Endothelial cell of umbilical vein (primary cell): ENCODE measurements at regions of chr19 and their contacts with region 1.

Region 1: GRCh38 chr19:10095948-10096621 is 6.4 kb downstream of the ANGPTL6 start:
- DNase-seq: peak; percentile 91
- H3K4me3 ChIP-seq: peak overlapping the region in 1 of 3 experiments; percentile 35
- H3K27ac ChIP-seq: no peak overlapping the region
- H3K4me1 ChIP-seq: peaks cover 3% of the 10 kb centered on the region
- H3K27me3 ChIP-seq: peaks cover 0 to 3% of the 10 kb centered on the region in 2 experiments
- CTCF ChIP-seq: no peak
- POLR2A ChIP-seq: peak; percentile 75

Region 2: DNA sequence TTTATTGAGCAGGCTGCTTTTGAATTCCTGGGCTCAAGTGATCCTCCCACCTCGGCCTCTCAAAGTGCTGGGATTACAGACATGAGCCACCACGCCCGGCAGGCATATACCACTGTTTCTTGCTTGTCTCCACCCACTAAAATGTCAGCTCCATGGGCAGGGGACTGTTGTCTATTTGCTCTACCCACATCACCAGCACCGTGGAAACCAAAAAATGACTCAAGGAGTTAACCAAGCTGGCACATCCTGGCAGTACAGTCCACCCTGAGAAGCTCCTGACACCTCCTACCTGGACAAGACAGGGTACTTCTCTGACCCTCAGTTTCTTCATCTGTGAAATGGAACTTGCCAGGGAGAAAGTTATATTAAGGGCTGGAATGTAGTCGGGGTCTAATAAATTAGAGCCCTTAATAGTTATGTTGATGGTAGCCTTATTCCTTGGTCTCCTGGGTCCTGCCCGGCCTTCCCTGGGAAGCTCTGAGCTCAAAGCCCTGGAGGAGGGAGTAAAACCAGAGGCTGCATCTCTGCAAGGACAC is 68.9 kb before region 1 on chr19:
- CTCF ChIA-PET with region 1: no interaction called
- POLR2A ChIA-PET with region 1: no interaction called
- dilution Hi-C with region 1: no loop called
- intact Hi-C with region 1: no loop called
- DNase-seq: no peak
- H3K4me3 ChIP-seq: no peak overlapping the region
- H3K27ac ChIP-seq: no peak overlapping the region
- H3K4me1 ChIP-seq: peaks cover 4% of the 10 kb centered on the region
- H3K27me3 ChIP-seq: peaks cover 3 to 4% of the 10 kb centered on the region in 2 experiments
- CTCF ChIP-seq: no peak
- POLR2A ChIP-seq: no peak

Region 3: GRCh38 chr19:10061717-10062310 is 34.3 kb before region 1 on chr19:
- CTCF ChIA-PET with region 1: no interaction called
- POLR2A ChIA-PET with region 1: no interaction called
- dilution Hi-C with region 1: no loop called
- intact Hi-C with region 1: no loop called
- DNase-seq: no peak
- H3K4me3 ChIP-seq: no peak overlapping the region
- H3K27ac ChIP-seq: no peak overlapping the region
- H3K4me1 ChIP-seq: no peaks in the 10 kb centered on the region
- H3K27me3 ChIP-seq: no peaks in the 10 kb centered on the region
- CTCF ChIP-seq: no peak
- POLR2A ChIP-seq: no peak

Region 4: DNA sequence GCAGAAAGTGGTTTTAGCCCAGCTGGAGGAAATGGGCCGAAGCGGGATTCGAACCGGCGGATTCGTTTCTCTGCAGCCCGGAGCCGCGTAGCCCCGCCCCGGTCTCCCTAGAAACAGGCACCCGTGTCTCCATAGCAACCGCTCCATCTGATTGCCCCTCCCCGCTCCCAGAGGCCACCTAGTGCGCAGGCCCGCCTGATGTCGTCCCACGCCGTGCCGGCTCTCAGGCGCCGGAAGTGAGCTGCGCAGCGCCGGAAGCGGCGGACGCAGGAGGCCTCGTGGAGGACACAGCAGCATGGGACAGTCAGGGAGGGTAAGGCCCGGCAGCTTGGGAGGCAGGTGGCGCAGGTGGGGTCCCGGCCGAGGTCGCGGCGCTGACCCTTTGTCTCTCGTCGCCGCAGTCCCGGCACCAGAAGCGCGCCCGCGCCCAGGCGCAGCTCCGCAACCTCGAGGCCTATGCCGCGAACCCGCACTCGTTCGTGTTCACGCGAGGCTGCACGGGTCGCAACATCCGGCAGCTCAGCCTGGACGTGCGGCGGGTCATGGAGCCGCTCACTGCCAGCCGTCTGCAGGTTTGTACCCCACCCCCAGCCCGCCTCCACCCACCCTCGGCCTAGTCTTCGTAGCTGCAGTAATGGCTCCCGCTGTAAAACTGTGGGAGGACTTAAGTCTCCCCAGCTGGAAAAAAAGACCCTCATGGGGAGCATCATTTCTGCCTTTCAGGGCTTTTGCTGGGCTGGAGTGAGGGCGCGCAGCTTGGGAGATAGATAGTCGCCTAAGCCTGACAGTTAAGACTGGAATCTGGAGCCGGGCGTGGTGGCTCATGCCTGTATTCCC is 10.2 kb after region 1 on chr19 and contains the start of gene PPAN:
- CTCF ChIA-PET with region 1: interaction called, 13 read pairs
- POLR2A ChIA-PET with region 1: interaction called, 11 read pairs
- dilution Hi-C with region 1: no loop called
- intact Hi-C with region 1: loop called (anchors 1 kb)
- DNase-seq: peak; percentile 98
- H3K4me3 ChIP-seq: peak within 1 kb of the TSS; percentile 87 to 98 (median 95)
- H3K27ac ChIP-seq: peak within 1 kb of the TSS; percentile 50
- H3K4me1 ChIP-seq: peaks cover 9% of the 10 kb centered on the region
- H3K27me3 ChIP-seq: no peaks in the 10 kb centered on the region
- CTCF ChIP-seq: no peak
- POLR2A ChIP-seq: peak; percentile 89
- total RNA-seq, gene PPAN: 50.4 and 51.6 TPM in 2 replicates

Region 5: GRCh38 chr19:10112895-10113591 is 17.0 kb after region 1 on chr19:
- CTCF ChIA-PET with region 1: interaction called, 11 read pairs
- POLR2A ChIA-PET with region 1: no interaction called
- dilution Hi-C with region 1: no loop called
- intact Hi-C with region 1: no loop called
- DNase-seq: no peak
- H3K4me3 ChIP-seq: no peak overlapping the region
- H3K27ac ChIP-seq: no peak overlapping the region
- H3K4me1 ChIP-seq: no peaks in the 10 kb centered on the region
- H3K27me3 ChIP-seq: no peaks in the 10 kb centered on the region
- CTCF ChIP-seq: peak; percentile 65 to 81
- POLR2A ChIP-seq: peak; percentile 86